Transverse colon (tissue), 4 donors: ENCODE measurements at regions of chr5 and their contacts with region 1.

Region 1: DNA sequence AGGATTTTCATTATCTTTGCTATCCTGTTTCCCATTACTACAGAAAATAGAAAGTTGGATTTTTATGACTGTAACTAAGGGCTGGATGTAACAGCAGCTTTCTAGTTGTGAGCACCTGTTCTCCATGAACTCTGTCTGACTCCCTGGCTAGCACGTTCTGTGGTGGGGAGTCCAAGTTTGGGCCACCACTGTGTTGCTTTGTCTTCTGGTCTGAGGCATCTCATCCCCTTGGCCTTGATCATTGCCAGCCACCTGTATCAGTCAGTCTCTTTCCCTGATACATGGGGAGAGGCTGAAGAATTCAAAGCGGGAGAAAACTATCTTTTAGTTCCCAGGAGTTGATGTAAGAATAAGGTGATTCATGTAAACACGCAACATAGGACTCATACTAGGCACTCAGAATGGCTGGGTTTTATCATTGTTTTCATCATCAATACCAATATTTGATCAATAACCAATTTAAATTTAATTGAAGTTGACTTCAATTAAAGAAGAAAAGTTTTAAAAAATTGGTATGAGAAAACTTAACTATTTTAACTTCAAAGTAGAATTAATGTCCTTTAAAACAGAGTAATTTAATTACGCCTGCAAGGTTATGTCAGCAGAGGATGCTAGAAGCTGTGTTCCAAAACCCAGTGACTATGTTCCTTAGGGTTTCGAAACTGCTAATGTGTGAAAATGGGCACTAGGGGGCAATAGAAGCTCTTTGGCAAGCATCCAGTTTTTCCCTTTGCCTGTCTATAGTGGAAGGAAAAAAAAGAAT is 33.6 kb downstream of the WDR70 start:
- DNase-seq: peak; percentile 66
- H3K4me3 ChIP-seq: no peak overlapping the region
- H3K27ac ChIP-seq: no peak overlapping the region
- H3K4me1 ChIP-seq: no peaks in the 10 kb centered on the region
- H3K27me3 ChIP-seq: no peaks in the 10 kb centered on the region
- CTCF ChIP-seq: peak; percentile 70 to 93 (median 83)
- EP300 ChIP-seq: no peak
- POLR2A ChIP-seq: no peak

Region 2: GRCh38 chr5:36965179-36965578 is 447.5 kb before region 1 on chr5:
- in situ Hi-C with region 1: no loop called
- intact Hi-C with region 1: no loop called
- DNase-seq: no peak
- H3K4me3 ChIP-seq: no peak overlapping the region
- H3K27ac ChIP-seq: no peak overlapping the region
- H3K4me1 ChIP-seq: no peaks in the 10 kb centered on the region
- H3K27me3 ChIP-seq: no peaks in the 10 kb centered on the region
- CTCF ChIP-seq: no peak
- EP300 ChIP-seq: no peak
- POLR2A ChIP-seq: no peak

Region 3: GRCh38 chr5:37251669-37252068 is 161.0 kb before region 1 on chr5:
- in situ Hi-C with region 1: no loop called
- intact Hi-C with region 1: no loop called
- DNase-seq: no peak
- H3K4me3 ChIP-seq: no peak overlapping the region
- H3K27ac ChIP-seq: no peak overlapping the region
- H3K4me1 ChIP-seq: peaks cover 5 to 20% (median 13%) of the 10 kb centered on the region in 4 donors
- H3K27me3 ChIP-seq: no peaks in the 10 kb centered on the region
- CTCF ChIP-seq: no peak
- EP300 ChIP-seq: no peak
- POLR2A ChIP-seq: no peak

Region 4: DNA sequence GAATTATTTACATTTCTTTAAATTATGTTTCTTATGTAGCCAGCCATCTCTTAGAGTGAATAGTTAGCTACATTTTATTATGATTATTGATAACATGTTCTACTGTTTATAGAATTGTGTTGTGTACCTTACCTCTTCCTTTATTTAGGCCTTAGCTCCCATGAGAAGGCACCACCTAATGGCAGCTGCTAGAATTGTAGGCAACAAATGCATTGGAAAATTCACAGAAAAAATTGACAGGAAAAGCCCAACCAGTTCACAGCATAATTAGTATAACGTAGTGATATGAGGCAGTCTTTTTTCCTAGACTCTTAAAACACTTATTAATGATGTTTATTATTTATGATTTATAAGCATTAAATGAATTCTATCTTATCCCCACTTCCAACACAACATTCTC is 142.2 kb after region 1 on chr5:
- in situ Hi-C with region 1: loop called in 1 of 4 experiments (anchors 25 kb)
- intact Hi-C with region 1: no loop called
- DNase-seq: no peak
- H3K4me3 ChIP-seq: no peak overlapping the region
- H3K27ac ChIP-seq: no peak overlapping the region
- H3K4me1 ChIP-seq: peaks cover 0 to 14% (median 12%) of the 10 kb centered on the region in 4 donors
- H3K27me3 ChIP-seq: no peaks in the 10 kb centered on the region
- CTCF ChIP-seq: peak in 4 of 5 experiments; percentile 16 to 36 (median 29)
- EP300 ChIP-seq: no peak
- POLR2A ChIP-seq: no peak